Heart left ventricle (tissue), 16 donors: ENCODE measurements at regions of chr5 and their contacts with region 1.

Region 1: GRCh38 chr5:169701910-169702451 is 64.9 kb downstream of the DOCK2 start:
- DNase-seq: no peak
- ATAC-seq: peak in 1 of 4 donors; percentile 42
- H3K4me3 ChIP-seq: no peak overlapping the region
- H3K27ac ChIP-seq: no peak overlapping the region
- H3K4me1 ChIP-seq: no peaks in the 10 kb centered on the region
- H3K27me3 ChIP-seq: no peaks in the 10 kb centered on the region
- CTCF ChIP-seq: peak in 11 of 12 donors; percentile 24 to 60 (median 44)
- POLR2A ChIP-seq: no peak

Region 2: DNA sequence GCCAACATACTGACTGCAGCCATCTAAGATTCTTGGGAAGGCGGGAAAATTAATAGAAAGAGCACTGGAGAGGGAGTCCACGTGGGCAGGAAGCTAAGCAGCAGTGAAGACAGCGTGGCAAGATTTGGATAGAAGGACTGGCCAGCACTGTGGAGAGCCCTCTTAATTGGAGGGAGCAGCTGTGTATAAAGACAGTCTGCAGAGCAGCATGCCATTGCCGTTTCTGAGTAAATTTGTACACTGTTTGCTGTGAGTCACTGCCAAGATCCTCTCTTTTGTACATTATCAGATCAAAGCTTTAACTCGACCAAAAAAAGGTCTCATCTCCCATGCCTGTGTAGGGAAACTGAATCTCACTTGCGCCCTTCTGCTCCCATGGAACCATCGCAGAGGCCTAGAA is 233.0 kb after region 1 on chr5:
- intact Hi-C with region 1: no loop called
- DNase-seq: no peak
- ATAC-seq: no peak
- H3K4me3 ChIP-seq: no peak overlapping the region
- H3K27ac ChIP-seq: no peak overlapping the region
- H3K4me1 ChIP-seq: no peaks in the 10 kb centered on the region
- H3K27me3 ChIP-seq: peaks cover 0 to 4% (median 0%) of the 10 kb centered on the region in 9 donors
- CTCF ChIP-seq: no peak
- POLR2A ChIP-seq: no peak

Region 3: GRCh38 chr5:169980418-169981053 is 278.6 kb after region 1 on chr5 and contains the start of gene INSYN2B:
- intact Hi-C with region 1: loop called (anchors 1 to 5 kb)
- DNase-seq: peak in 4 of 5 donors; percentile 37 to 58 (median 54)
- ATAC-seq: peak; percentile 69 to 89 (median 81)
- H3K4me3 ChIP-seq: peak within 1 kb of the TSS in 9 of 12 donors; percentile 2 to 37 (median 24)
- H3K27ac ChIP-seq: no peak within 1 kb of the TSS
- H3K4me1 ChIP-seq: peaks cover 0 to 12% (median 0%) of the 10 kb centered on the region in 12 donors
- H3K27me3 ChIP-seq: peaks cover 0 to 40% (median 2%) of the 10 kb centered on the region in 9 donors
- CTCF ChIP-seq: peak; percentile 40 to 62 (median 56)
- POLR2A ChIP-seq: no peak
- total RNA-seq, gene INSYN2B: 0.12 to 0.59 (median 0.19) TPM in 4 of 9 donors, not detected in the others

Region 4: GRCh38 chr5:170070556-170071412 is 368.8 kb after region 1 on chr5:
- intact Hi-C with region 1: loop called in 8 of 10 experiments (anchors 1 to 10 kb)
- DNase-seq: peak in 1 of 5 donors; percentile 38
- ATAC-seq: peak in 3 of 4 donors; percentile 46 to 73 (median 57)
- H3K4me3 ChIP-seq: no peak overlapping the region
- H3K27ac ChIP-seq: no peak overlapping the region
- H3K4me1 ChIP-seq: no peaks in the 10 kb centered on the region
- H3K27me3 ChIP-seq: no peaks in the 10 kb centered on the region
- CTCF ChIP-seq: peak; percentile 54 to 82 (median 68)
- POLR2A ChIP-seq: no peak

Region 5: DNA sequence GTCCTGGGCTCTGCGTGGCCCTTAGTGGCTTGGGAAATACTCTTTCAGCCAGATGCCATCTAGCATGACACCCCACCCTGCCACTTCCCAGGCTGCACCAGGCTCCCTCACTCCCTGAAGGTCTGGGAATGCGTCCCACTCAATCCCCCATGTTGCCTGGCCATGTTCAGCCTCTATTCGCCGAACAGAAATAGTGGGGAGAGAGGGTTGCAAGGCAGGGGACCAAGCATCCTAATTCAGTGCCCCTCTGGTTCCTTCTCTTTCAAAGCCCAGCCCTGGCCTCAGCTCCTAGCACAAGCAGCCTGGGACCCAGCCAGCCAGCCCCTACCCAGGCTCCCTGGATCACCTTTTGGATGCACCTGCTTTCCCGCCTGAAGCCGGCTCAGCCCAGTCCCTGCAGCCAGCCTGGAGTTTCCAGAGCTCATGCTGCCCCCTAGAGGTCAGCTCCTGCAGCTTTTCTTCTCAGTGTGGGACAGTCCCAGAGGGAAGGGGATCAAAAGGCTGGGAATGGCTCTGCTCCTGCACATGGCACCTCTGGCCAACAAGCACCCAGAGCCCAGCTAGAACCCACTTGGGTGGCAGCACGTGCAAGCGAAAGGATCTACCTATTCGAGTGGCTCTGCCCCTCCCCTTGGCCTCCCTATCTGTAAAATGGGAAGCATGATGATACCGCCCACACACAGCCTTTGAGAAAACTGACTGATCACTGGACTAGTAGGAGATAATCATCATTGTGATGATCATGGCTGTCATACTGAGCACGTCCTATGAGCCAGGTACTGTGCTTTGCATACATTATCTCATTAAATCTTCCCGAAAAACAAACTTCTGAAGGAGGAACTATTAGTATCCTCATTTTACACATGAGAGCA is 482.1 kb after region 1 on chr5:
- intact Hi-C with region 1: loop called in 3 of 10 experiments (anchors 10 kb)
- DNase-seq: peak; percentile 45 to 67 (median 61)
- ATAC-seq: peak in 3 of 4 donors; percentile 81 to 85 (median 82)
- H3K4me3 ChIP-seq: no peak overlapping the region
- H3K27ac ChIP-seq: no peak overlapping the region
- H3K4me1 ChIP-seq: peaks cover 0 to 4% (median 0%) of the 10 kb centered on the region in 12 donors
- H3K27me3 ChIP-seq: peaks cover 0 to 11% (median 0%) of the 10 kb centered on the region in 9 donors
- CTCF ChIP-seq: peak; percentile 63 to 81 (median 74)
- POLR2A ChIP-seq: no peak